HCT116 (cell line): ENCODE measurements at regions of chr15 and their contacts with region 1.

Region 1: GRCh38 chr15:83248151-83249029 is 36.1 kb downstream of the BNC1 start:
- DNase-seq: peak; percentile 67
- ATAC-seq: peak; percentile 91
- H3K4me3 ChIP-seq: no peak overlapping the region
- H3K27ac ChIP-seq: no peak overlapping the region
- H3K4me1 ChIP-seq: no peaks in the 10 kb centered on the region
- H3K27me3 ChIP-seq: no peaks in the 10 kb centered on the region
- CTCF ChIP-seq: peak; percentile 74 to 92 (median 87)
- POLR2A ChIP-seq: no peak
- RAD21 ChIP-seq: peak; percentile 94

Region 2: DNA sequence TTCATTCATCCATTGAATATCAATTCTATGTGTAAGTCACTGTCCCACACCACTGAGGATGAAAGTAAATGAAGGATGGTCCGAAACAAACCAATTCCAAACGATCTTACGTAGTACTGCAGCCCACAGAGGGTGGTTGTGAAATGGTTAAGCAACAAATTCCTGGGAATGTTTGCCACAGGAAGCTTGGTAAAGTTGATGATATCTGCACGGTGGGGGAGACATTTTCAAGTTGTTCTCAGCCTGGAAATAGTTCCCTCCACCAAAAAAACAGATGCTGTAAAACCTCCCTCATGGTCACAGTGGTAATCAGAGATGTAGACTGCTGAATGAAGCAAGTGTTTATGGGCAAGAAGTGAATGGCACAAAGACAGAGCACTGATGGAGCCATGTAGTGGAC is 72.0 kb after region 1 on chr15:
- CTCF ChIA-PET with region 1: no interaction called
- POLR2A ChIA-PET with region 1: no interaction called
- RAD21 ChIA-PET with region 1: no interaction called
- intact Hi-C with region 1: no loop called
- DNase-seq: no peak
- ATAC-seq: no peak
- H3K4me3 ChIP-seq: no peak overlapping the region
- H3K27ac ChIP-seq: no peak overlapping the region
- H3K4me1 ChIP-seq: no peaks in the 10 kb centered on the region
- H3K27me3 ChIP-seq: no peaks in the 10 kb centered on the region
- CTCF ChIP-seq: no peak
- POLR2A ChIP-seq: no peak
- RAD21 ChIP-seq: no peak

Region 3: DNA sequence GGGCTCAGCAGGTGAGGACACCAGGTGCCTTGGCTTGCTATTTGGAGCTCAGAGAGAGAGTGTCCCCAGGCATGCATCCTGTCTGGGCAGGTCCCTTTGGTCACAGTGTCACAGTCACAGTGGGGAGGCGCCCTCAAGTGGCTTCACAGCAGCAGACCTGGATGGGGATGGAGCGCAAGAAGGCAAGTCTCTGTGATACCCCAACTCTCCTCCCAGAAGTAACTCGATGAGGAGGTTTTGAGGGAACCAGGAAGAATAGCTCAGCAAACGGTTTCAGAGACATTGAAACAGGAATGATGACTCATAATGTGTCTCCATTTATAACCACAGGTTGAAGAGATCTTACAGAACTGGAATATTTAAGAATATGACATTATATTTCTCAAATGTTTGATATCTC is 132.3 kb after region 1 on chr15:
- CTCF ChIA-PET with region 1: interaction called, 82 read pairs
- POLR2A ChIA-PET with region 1: interaction called, 12 read pairs
- RAD21 ChIA-PET with region 1: interaction called, 9 to 31 read pairs
- intact Hi-C with region 1: loop called (anchors 1 kb)
- DNase-seq: peak; percentile 69
- ATAC-seq: peak; percentile 78
- H3K4me3 ChIP-seq: peak overlapping the region in 1 of 2 experiments; percentile 61; a peak in 2 of 4 replicates
- H3K27ac ChIP-seq: peak overlapping the region; percentile 51
- H3K4me1 ChIP-seq: peaks cover 18 to 39% of the 10 kb centered on the region in 2 experiments
- H3K27me3 ChIP-seq: no peaks in the 10 kb centered on the region
- CTCF ChIP-seq: peak; percentile 65 to 77 (median 73); a peak in 5 of 6 replicates
- POLR2A ChIP-seq: no peak
- RAD21 ChIP-seq: peak; percentile 93

Region 4: GRCh38 chr15:83436458-83437158 is 188.2 kb after region 1 on chr15:
- CTCF ChIA-PET with region 1: interaction called, 125 read pairs
- POLR2A ChIA-PET with region 1: interaction called, 3 read pairs
- RAD21 ChIA-PET with region 1: interaction called, 16 to 29 read pairs
- intact Hi-C with region 1: loop called (anchors 1 kb)
- DNase-seq: peak; percentile 33
- ATAC-seq: peak; percentile 90
- H3K4me3 ChIP-seq: no peak overlapping the region
- H3K27ac ChIP-seq: no peak overlapping the region
- H3K4me1 ChIP-seq: no peaks in the 10 kb centered on the region
- H3K27me3 ChIP-seq: no peaks in the 10 kb centered on the region
- CTCF ChIP-seq: peak; percentile 58 to 69 (median 69); a peak in 5 of 6 replicates
- POLR2A ChIP-seq: no peak
- RAD21 ChIP-seq: peak; percentile 75

Region 5: GRCh38 chr15:83567318-83567717 is 318.9 kb after region 1 on chr15:
- CTCF ChIA-PET with region 1: interaction called, 21 read pairs
- POLR2A ChIA-PET with region 1: no interaction called
- RAD21 ChIA-PET with region 1: interaction called in 1 of 2 experiments, 3 read pairs
- intact Hi-C with region 1: no loop called
- DNase-seq: no peak
- ATAC-seq: no peak
- H3K4me3 ChIP-seq: no peak overlapping the region
- H3K27ac ChIP-seq: no peak overlapping the region
- H3K4me1 ChIP-seq: no peaks in the 10 kb centered on the region; a peak in 1 of 4 replicates
- H3K27me3 ChIP-seq: no peaks in the 10 kb centered on the region
- CTCF ChIP-seq: no peak
- POLR2A ChIP-seq: no peak
- RAD21 ChIP-seq: no peak

Region 6: GRCh38 chr15:84035399-84035766 is 787.0 kb after region 1 on chr15:
- CTCF ChIA-PET with region 1: no interaction called
- POLR2A ChIA-PET with region 1: no interaction called
- RAD21 ChIA-PET with region 1: no interaction called
- intact Hi-C with region 1: loop called (anchors 5 kb)
- DNase-seq: peak; percentile 46
- ATAC-seq: peak; percentile 88
- H3K4me3 ChIP-seq: no peak overlapping the region
- H3K27ac ChIP-seq: no peak overlapping the region
- H3K4me1 ChIP-seq: peaks cover 0 to 3% of the 10 kb centered on the region in 2 experiments; a peak in 1 of 4 replicates
- H3K27me3 ChIP-seq: peaks cover 17% of the 10 kb centered on the region; the same call in 1 of the 2 replicates
- CTCF ChIP-seq: peak; percentile 47 to 61 (median 58); a peak in 5 of 6 replicates
- POLR2A ChIP-seq: no peak
- RAD21 ChIP-seq: peak; percentile 43